ENCODE measurements at regions of chr21 and their contacts with region 1.

Region 1: GRCh38 chr21:32834916-32835235 is 63.3 kb upstream of the PAXBP1 start:
- DNase-seq: no peak

Region 2: DNA sequence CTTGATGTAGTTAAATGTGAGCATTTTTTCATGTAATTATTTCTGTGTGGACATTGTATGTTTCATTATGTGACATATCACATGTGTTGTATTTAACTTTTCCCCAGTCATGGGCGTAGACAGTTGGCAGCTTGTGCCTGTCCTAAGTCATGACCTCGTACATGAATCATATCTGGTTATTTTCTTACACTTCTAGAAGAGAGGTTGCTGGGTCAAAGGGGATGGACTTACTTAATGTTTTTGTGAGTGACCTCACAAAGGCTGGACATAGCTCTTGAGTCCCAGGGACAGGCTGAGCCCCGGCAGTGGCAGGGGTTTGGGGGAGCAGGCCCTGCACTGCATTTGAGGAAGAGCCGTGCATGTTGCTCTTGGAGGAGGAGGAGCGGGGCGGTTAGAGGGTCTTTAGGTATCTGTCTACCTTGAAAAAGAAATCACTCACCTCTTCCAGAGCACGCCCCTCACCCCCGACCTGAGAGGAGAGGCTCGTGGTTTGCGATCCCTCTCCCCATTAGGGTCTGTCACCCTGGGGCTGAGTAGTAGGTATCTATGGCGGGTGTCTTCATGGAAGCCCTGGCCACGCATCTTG is 584.8 kb after region 1 on chr21:
- intact Hi-C with region 1: loop called (anchors 10 kb)
- DNase-seq: no peak

Measured in cardiac septum (tissue), 1 donor.